Colonic mucosa (tissue), 4 donors: ENCODE measurements at regions of chr1 and their contacts with region 1.

Region 1: GRCh38 chr1:171644805-171645483 is 7.5 kb downstream of the MYOC start:
- DNase-seq: peak; percentile 89
- H3K4me3 ChIP-seq: no peak overlapping the region
- H3K27ac ChIP-seq: peak overlapping the region; percentile 30
- H3K4me1 ChIP-seq: peaks cover 6% of the 10 kb centered on the region
- H3K27me3 ChIP-seq: no peaks in the 10 kb centered on the region
- CTCF ChIP-seq: peak; percentile 83

Region 2: GRCh38 chr1:171610385-171610784 is 34.6 kb before region 1 on chr1:
- intact Hi-C with region 1: no loop called
- DNase-seq: no peak
- H3K4me3 ChIP-seq: no peak overlapping the region
- H3K27ac ChIP-seq: no peak overlapping the region
- H3K4me1 ChIP-seq: no peaks in the 10 kb centered on the region
- H3K27me3 ChIP-seq: no peaks in the 10 kb centered on the region
- CTCF ChIP-seq: no peak

Region 3: GRCh38 chr1:171715813-171716251 is 70.9 kb after region 1 on chr1:
- intact Hi-C with region 1: loop called (anchors 5 kb)
- DNase-seq: no peak
- H3K4me3 ChIP-seq: no peak overlapping the region
- H3K27ac ChIP-seq: no peak overlapping the region
- H3K4me1 ChIP-seq: no peaks in the 10 kb centered on the region
- H3K27me3 ChIP-seq: no peaks in the 10 kb centered on the region
- CTCF ChIP-seq: peak; percentile 22

Region 4: GRCh38 chr1:171781176-171781875 is 136.4 kb after region 1 on chr1 and contains the start of gene METTL13:
- intact Hi-C with region 1: loop called (anchors 10 kb)
- DNase-seq: peak; percentile 99
- H3K4me3 ChIP-seq: peak within 1 kb of the TSS; percentile 62
- H3K27ac ChIP-seq: peak within 1 kb of the TSS; percentile 88
- H3K4me1 ChIP-seq: peaks cover 9% of the 10 kb centered on the region
- H3K27me3 ChIP-seq: no peaks in the 10 kb centered on the region
- CTCF ChIP-seq: no peak
- total RNA-seq, gene METTL13: 19.9 to 42.7 TPM

Region 5: GRCh38 chr1:171984850-171985485 is 340.0 kb after region 1 on chr1:
- intact Hi-C with region 1: loop called (anchors 5 kb)
- DNase-seq: no peak
- H3K4me3 ChIP-seq: no peak overlapping the region
- H3K27ac ChIP-seq: no peak overlapping the region
- H3K4me1 ChIP-seq: no peaks in the 10 kb centered on the region
- H3K27me3 ChIP-seq: no peaks in the 10 kb centered on the region
- CTCF ChIP-seq: peak; percentile 79